Cardiac septum (tissue), 1 donor: ENCODE measurements at regions of chr5 and their contacts with region 1.

Region 1: DNA sequence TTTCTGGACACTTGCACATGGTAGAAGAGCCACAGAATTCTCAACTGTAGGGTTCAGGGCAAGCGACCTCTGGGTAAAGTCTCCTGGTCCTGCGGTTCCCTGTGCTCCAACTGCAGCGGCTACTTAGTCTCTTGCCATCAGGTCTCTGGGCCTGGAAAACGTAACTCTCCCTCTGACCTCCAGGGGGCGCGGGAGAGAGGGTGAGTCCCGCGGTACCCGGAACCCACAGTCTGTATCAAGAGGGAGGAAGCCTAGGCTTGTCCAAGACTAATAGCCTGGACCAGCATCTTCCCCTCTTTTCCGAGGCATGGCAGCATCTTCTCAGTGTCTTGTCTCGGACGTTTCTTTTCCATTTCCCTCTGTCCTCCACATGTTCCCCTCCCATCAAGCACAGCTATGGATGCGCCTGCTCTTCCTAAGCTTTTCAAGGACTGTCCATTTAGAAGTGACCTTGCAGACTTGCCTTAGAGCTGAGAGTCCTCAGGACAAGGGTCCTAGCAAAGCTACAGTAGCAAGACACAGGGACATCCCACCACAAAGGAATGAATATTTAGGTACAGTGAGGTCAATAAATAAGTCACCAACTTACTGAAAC is 59.3 kb downstream of the FSTL4 start:
- DNase-seq: no peak

Region 2: GRCh38 chr5:133610489-133611356 is 57.7 kb after region 1 on chr5:
- intact Hi-C with region 1: loop called (anchors 5 kb)
- DNase-seq: no peak

Region 3: DNA sequence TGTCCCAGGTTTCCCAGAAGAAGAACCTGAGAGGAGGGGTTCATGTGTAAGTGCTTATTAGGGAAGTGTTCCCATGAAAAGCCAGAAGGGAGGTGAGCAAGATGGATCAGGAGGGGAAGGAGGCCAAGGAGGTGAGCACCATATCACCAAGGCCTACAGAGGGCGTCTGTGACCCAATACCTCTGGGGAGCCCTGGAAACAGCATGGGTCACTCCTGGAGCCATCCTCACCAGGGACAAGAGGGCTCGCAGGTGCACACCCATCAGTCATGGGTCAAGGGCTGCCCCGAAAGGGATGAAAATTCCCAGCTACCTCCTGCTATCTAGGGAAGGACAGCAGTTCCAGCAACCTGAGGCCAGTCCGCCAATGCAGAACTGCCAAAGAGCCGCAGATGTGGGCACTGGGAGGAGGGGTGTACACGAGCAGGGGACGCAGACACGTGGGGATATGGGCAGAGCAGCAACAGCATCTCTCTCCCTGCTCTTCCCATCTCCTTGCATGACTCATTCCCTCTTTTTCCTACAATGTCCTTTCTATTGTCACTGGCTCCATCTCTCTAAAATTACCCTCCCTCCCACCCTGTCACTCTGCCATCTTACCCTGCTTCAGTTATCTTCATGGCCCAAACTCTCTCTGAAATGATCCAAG is 226.9 kb after region 1 on chr5:
- intact Hi-C with region 1: no loop called
- DNase-seq: no peak